Prostate gland (tissue), 2 donors: ENCODE measurements at regions of chr6 and their contacts with region 1.

Region 1: DNA sequence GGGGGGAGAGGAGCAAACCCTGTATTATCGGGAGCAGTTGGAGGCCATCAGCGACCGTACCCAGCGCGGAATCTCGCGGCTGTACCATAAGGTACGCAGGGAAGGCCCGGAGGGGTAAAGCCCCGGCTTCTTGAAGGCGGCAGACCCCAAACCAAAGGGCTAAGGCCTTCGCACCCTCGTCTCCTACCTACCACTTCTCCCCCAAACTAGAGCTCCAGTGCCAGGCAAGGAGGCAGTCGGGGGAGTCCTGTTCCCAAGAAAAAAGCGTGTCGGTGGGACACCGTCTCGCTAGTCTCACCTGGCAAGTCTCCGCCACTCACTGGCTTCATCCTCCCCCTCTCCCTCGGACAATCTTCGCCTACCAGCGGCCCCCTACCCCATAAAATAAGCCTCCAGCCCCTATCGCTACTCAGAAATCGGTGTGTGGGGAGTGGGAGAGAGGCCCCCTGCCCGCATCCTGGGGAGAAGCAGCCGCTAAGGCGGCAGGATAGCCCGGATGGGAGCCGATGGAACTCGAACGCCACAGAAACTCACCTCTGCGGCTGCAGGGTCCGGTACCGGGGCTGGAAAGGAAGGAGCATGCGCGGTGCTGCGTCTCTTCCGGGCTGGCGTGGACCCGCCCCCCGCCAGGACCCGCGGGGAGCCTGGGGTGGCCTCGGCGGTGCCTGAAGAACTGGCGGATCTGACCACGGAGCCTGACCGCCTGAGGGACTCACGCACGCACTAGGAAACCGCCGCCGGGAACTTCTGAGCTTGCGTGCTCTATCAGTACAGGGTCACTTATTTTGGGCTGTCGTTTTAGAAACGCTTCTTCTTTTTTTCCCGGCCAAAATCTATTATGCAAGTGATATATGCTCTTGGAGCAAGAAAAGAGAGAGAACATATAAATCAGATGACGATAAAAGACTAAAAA is at the start of gene RPS10:
- DNase-seq: peak; percentile 87
- H3K4me3 ChIP-seq: peak within 1 kb of the TSS; percentile 60 to 76
- H3K27ac ChIP-seq: peak within 1 kb of the TSS; percentile 56 to 83
- H3K4me1 ChIP-seq: no peaks in the 10 kb centered on the region
- H3K27me3 ChIP-seq: no peaks in the 10 kb centered on the region
- CTCF ChIP-seq: peak in 2 of 4 experiments; percentile 12 to 24
- POLR2A ChIP-seq: peak; percentile 83
- total RNA-seq, gene RPS10: 1,707 to 2,711 TPM

Region 2: GRCh38 chr6:34392497-34393190 is 33.1 kb before region 1 on chr6 and contains the start of gene NUDT3:
- intact Hi-C with region 1: loop called (anchors 2 kb)
- DNase-seq: peak; percentile 93
- H3K4me3 ChIP-seq: peak within 1 kb of the TSS; percentile 88 to 90
- H3K27ac ChIP-seq: peak within 1 kb of the TSS; percentile 90 to 91
- H3K4me1 ChIP-seq: no peaks in the 10 kb centered on the region
- H3K27me3 ChIP-seq: no peaks in the 10 kb centered on the region
- CTCF ChIP-seq: peak in 3 of 4 experiments; percentile 67 to 94 (median 91)
- POLR2A ChIP-seq: peak; percentile 40
- total RNA-seq, gene NUDT3: 28.9 to 30.8 TPM

Region 3: GRCh38 chr6:34602318-34603111 is 176.8 kb after region 1 on chr6:
- intact Hi-C with region 1: loop called (anchors 10 kb)
- DNase-seq: peak; percentile 91
- H3K4me3 ChIP-seq: no peak overlapping the region
- H3K27ac ChIP-seq: peak overlapping the region; percentile 78 to 80
- H3K4me1 ChIP-seq: peaks cover 28% of the 10 kb centered on the region
- H3K27me3 ChIP-seq: no peaks in the 10 kb centered on the region
- CTCF ChIP-seq: no peak
- POLR2A ChIP-seq: no peak